Prostate gland (tissue), 2 donors: ENCODE measurements at regions of chr10 and their contacts with region 1.

Region 1: DNA sequence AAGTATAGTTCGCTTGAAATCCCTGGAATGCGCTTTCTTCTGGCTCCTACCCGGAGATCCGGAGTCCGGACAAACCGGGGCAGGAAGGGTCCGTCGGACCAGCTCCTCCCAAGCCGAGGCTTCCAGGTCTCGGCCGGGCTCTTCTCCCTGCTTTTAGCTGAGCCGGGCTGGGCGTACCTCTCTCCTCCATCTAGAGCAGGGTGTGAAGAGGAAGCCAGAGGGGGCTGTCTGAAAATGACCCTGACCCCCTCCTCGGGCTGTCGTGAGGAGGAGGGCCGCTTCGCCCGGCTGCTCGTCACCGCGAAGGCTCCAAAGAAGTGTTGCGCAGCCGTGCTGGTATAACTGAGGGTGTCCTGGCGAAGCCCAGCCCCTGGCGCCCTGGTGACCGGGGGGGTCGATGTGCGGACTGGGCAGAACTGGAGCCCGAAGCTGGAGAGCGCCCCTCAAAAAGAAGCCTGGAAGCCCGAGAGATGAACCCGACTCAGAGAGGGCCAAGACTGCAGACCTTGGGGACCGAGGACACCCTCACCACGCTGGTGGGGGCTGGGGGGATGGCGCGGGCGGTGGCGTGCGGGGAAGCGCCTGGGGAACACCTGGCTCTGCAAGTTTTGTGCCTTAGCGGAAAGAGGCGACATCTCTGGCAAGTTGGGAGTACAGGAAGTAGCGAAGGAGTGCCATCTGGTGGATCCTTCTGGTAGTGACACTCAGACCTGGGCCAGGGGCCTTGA is 5.7 kb downstream of the KAZALD1 start:
- DNase-seq: peak; percentile 78
- H3K4me3 ChIP-seq: peak overlapping the region; percentile 38 to 47
- H3K27ac ChIP-seq: peak overlapping the region; percentile 82 to 85
- H3K4me1 ChIP-seq: peaks cover 5% of the 10 kb centered on the region
- H3K27me3 ChIP-seq: no peaks in the 10 kb centered on the region
- CTCF ChIP-seq: peak; percentile 73 to 96 (median 92)
- POLR2A ChIP-seq: no peak

Region 2: GRCh38 chr10:101031128-101031795 is 36.3 kb before region 1 on chr10 and contains the starts of genes PDZD7 and SFXN3:
- intact Hi-C with region 1: loop called (anchors 5 kb)
- DNase-seq: peak; percentile 95
- H3K4me3 ChIP-seq: peak within 1 kb of the TSS; percentile 70 to 75
- H3K27ac ChIP-seq: peak within 1 kb of the TSS; percentile 97
- H3K4me1 ChIP-seq: peaks cover 16% of the 10 kb centered on the region
- H3K27me3 ChIP-seq: no peaks in the 10 kb centered on the region
- CTCF ChIP-seq: peak in 1 of 4 experiments; percentile 32
- POLR2A ChIP-seq: peak; percentile 82
- total RNA-seq, gene PDZD7: 0.82 to 1.5 TPM
- total RNA-seq, gene SFXN3: 20.7 to 65.4 TPM

Region 3: GRCh38 chr10:101041252-101041761 is 26.2 kb before region 1 on chr10:
- intact Hi-C with region 1: loop called (anchors 2 kb)
- DNase-seq: peak; percentile 85
- H3K4me3 ChIP-seq: no peak overlapping the region
- H3K27ac ChIP-seq: peak overlapping the region in 1 of 2 donors; percentile 82
- H3K4me1 ChIP-seq: peaks cover 7% of the 10 kb centered on the region
- H3K27me3 ChIP-seq: no peaks in the 10 kb centered on the region
- CTCF ChIP-seq: peak; percentile 65 to 84 (median 76)
- POLR2A ChIP-seq: no peak

Region 4: DNA sequence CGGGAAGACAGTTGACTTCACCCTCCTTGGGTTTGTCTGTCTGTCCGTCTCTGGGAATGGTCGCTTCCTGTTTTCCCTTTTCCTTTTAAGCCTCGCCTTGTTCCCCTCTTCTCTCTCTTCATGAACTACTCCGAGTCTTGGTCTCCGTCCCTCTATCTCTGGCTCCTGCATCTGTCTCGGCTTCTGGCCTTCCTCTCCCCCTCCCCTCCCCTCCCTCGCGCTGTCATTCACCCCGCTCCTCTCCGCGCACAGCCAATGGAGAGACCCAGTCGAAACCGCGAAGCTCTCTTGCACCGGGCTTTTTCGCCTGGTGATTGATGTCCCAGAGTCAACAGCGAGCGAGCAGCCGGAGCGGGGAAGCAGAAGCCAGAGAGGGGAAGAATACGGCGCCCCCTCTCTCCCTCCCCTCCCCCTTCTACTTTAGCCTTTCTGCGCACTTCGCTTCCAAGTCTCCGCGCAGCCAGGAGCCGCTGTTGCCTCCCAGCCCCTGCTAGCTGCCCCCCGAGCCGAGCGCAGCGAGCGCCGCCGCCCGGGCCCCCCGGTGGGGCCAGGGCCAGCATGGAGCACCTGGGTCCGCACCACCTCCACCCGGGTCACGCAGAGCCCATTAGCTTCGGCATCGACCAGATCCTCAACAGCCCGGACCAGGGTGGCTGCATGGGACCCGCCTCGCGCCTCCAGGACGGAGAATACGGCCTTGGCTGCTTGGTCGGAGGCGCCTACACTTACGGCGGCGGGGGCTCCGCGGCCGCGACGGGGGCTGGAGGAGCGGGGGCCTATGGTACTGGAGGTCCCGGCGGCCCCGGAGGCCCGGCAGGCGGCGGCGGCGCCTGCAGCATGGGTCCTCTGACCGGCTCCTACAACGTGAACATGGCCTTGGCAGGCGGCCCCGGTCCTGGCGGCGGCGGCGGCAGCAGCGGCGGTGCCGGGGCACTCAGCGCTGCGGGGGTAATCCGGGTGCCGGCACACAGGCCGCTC is 63.8 kb after region 1 on chr10 and contains the start of gene TLX1:
- intact Hi-C with region 1: no loop called
- DNase-seq: no peak
- H3K4me3 ChIP-seq: peak within 1 kb of the TSS in 1 of 2 donors; percentile 17
- H3K27ac ChIP-seq: no peak within 1 kb of the TSS
- H3K4me1 ChIP-seq: peaks cover 10% of the 10 kb centered on the region
- H3K27me3 ChIP-seq: peaks cover 69% of the 10 kb centered on the region
- CTCF ChIP-seq: no peak
- POLR2A ChIP-seq: no peak
- total RNA-seq, gene TLX1: 0.05 to 0.34 TPM